ENCODE measurements at regions of chr7 and their contacts with region 1.

Region 1: DNA sequence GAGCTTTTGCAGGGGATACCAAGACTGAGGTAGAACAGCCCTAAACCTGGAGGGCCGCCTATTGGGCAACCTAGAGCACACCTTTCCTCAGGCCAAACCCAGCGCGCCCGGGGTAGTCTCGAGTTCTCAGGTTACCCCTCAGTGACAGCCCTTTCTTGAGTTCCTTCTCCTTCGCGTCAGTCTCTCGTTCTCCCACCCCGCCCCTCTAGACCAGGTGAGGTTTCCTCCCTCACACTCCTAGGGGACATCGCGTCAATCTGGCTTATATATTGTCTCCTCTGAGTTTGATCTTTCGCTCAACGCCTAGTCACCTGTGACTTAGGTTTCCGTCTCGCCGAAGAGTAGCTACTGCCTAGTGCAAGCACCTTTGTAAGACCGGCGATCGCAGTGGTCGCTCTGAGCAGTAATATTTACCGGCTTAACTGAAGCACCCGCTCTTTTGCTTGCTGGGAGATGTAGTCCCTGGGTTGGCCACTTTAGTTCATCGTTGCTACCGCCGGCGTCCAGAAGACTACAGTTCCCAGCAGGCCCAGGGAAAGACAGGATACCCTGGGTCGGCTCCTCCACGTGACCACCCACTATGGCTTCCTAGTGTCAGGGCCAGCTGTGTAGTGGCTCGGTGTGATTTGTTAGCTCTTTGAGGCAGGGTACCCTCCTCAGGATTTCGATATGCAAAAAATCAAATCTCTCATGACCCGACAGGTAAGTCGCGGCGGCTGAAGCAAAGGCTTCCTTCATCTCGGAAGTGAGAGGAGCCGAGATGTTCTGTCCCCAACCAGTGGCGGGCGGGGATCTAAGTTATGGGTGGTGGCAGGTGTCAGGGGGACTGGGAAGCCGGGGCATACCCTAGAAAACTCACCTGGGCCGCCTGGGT is at the start of gene VPS50:
- DNase-seq: peak; percentile 97
- ATAC-seq: peak; percentile 99
- H3K4me3 Mint-ChIP-seq: peak within 1 kb of the TSS; percentile 95
- H3K27ac Mint-ChIP-seq: peak within 1 kb of the TSS; percentile 92
- H3K4me1 Mint-ChIP-seq: peaks cover 6% of the 10 kb centered on the region
- H3K27me3 Mint-ChIP-seq: no peaks in the 10 kb centered on the region
- CTCF ChIP-seq: no peak
- total RNA-seq, gene VPS50: 15.5 to 18.5 TPM

Region 2: DNA sequence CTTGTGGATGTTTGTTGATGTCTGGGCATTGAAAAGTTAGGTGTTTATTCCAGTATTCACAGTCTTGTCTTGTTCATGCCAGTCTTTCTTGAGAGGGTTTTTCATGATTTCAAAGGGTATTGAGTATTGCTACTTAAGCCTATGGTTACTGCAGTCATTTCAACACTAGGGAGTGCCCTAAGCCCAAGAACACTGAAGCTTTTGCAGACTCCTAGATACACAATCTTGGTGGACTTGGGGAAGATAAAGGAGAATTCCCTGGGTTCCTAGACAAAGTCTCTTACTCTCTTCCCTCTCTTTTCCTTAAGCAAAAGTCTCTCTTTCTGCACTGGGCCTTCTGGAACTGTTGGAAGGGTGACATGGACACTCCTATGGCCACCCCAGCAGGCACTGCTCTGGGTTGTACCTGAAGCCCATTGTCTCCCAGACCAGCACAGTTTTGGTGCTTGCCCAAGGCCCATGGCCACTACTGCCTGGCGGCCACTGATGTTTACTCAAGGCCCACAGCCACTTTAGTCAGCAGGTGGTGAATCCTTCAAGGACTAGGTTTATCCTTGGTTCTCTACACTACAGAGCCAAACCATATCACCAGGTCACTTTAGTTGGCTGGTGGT is 139.2 kb before region 1 on chr7:
- CTCF ChIA-PET with region 1: interaction called, 28 read pairs
- POLR2A ChIA-PET with region 1: no interaction called
- intact Hi-C with region 1: loop called (anchors 5 kb)
- DNase-seq: peak; percentile 7
- ATAC-seq: no peak
- H3K4me3 Mint-ChIP-seq: no peak overlapping the region
- H3K27ac Mint-ChIP-seq: no peak overlapping the region
- H3K4me1 Mint-ChIP-seq: no peaks in the 10 kb centered on the region
- H3K27me3 Mint-ChIP-seq: peaks cover 8% of the 10 kb centered on the region
- CTCF ChIP-seq: peak; percentile 35

Region 3: DNA sequence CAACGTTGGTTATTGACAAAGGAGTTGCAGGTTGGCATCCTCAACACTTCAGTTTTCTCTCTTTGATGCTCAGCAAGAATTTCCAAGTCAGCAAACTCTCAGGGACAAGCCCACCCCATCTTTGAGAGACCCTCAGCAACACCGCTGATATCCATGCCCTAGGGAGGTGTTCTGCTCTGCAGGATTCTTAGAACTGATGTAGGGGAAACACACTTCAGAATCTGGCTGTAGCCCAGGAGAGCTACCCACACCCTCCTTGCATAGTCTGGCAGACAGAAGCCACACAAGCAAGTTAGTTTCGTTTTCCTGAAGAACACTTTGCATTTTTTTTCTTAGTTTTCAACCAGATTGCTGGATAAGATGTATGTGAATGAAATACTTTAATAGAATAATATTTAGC is 84.7 kb before region 1 on chr7:
- CTCF ChIA-PET with region 1: interaction called, 11 read pairs
- POLR2A ChIA-PET with region 1: interaction called, 3 read pairs
- intact Hi-C with region 1: no loop called
- DNase-seq: peak; percentile 63
- ATAC-seq: peak; percentile 92
- H3K4me3 Mint-ChIP-seq: peak overlapping the region; percentile 84
- H3K27ac Mint-ChIP-seq: peak overlapping the region; percentile 87
- H3K4me1 Mint-ChIP-seq: peaks cover 29% of the 10 kb centered on the region
- H3K27me3 Mint-ChIP-seq: no peaks in the 10 kb centered on the region
- CTCF ChIP-seq: no peak

Region 4: DNA sequence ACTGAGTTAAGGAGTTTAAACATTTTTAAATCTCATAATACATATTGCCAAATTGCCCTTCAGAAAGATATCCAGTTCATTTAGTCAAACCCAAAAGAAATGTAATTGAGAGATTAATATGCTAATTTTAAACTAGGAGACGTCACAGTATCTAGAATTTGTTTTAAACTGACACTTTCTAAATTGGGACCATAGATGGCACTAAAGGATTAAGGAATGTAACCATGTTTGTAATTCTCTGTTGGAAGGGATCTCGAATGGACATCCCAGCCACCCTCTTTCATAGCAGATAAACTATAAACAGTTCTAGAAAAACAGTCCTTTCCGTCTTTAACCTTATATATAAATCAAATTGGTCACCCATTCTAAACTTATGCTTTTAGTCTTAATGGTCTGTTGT is 53.8 kb before region 1 on chr7:
- CTCF ChIA-PET with region 1: interaction called, 10 read pairs
- POLR2A ChIA-PET with region 1: no interaction called
- intact Hi-C with region 1: no loop called
- DNase-seq: no peak
- ATAC-seq: no peak
- H3K4me3 Mint-ChIP-seq: no peak overlapping the region
- H3K27ac Mint-ChIP-seq: no peak overlapping the region
- H3K4me1 Mint-ChIP-seq: no peaks in the 10 kb centered on the region
- H3K27me3 Mint-ChIP-seq: peaks cover 12% of the 10 kb centered on the region
- CTCF ChIP-seq: peak; percentile 39

Region 5: GRCh38 chr7:93245525-93246432 is 13.7 kb after region 1 on chr7:
- CTCF ChIA-PET with region 1: interaction called, 23 read pairs
- POLR2A ChIA-PET with region 1: interaction called, 10 read pairs
- intact Hi-C with region 1: no loop called
- DNase-seq: no peak
- ATAC-seq: no peak
- H3K4me3 Mint-ChIP-seq: no peak overlapping the region
- H3K27ac Mint-ChIP-seq: no peak overlapping the region
- H3K4me1 Mint-ChIP-seq: peaks cover 8% of the 10 kb centered on the region
- H3K27me3 Mint-ChIP-seq: no peaks in the 10 kb centered on the region
- CTCF ChIP-seq: peak; percentile 78

Region 6: GRCh38 chr7:94004024-94004951 is 772.3 kb after region 1 on chr7 and contains the start of gene BET1:
- CTCF ChIA-PET with region 1: no interaction called
- POLR2A ChIA-PET with region 1: no interaction called
- intact Hi-C with region 1: loop called (anchors 5 kb)
- DNase-seq: peak; percentile 96
- ATAC-seq: peak; percentile 98
- H3K4me3 Mint-ChIP-seq: peak within 1 kb of the TSS; percentile 89
- H3K27ac Mint-ChIP-seq: peak within 1 kb of the TSS; percentile 95
- H3K4me1 Mint-ChIP-seq: peaks cover 18% of the 10 kb centered on the region
- H3K27me3 Mint-ChIP-seq: peaks cover 4% of the 10 kb centered on the region
- CTCF ChIP-seq: no peak
- total RNA-seq, gene BET1: 17.6 to 20.8 TPM